ENCODE measurements at regions of chr11 and their contacts with region 1.

Region 1: DNA sequence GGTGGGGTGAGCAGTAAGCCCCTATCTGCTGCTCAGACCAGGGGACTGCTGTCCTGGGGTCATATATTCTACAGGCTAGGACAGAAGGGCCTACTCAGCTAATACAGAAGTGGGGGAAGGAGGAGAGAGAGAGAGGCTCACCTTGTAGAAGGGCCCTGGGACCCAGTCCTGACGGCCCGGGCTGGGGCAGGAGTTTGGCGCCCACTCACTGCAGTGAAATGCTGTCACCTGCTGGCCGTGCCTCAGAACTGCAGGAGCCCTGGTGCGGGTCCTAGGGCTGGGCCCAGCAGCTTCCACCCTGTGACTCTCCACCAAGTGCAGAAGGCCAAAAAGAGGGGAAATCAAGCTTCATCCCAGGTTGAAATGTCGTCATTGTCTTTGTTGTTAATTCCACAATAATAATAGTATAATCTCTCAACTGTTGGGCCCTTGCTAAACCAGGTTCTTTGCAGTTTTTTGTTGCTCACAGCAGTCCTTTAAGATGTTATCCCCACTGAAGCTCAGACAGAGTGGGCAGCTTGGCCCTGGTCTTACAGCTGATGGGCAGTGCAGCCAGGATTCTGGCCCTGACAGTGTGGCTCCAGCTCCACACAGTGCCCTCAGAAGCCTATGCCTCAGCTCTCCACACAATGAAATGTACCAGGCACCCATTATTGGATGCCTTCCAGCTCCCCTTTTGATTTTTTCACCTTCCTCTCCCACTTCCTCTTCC is 29.6 kb downstream of the TRIM29 start:
- DNase-seq: no peak
- ATAC-seq: peak; percentile 97
- H3K4me3 ChIP-seq: no peak overlapping the region
- H3K27ac ChIP-seq: no peak overlapping the region
- H3K4me1 ChIP-seq: no peaks in the 10 kb centered on the region
- H3K27me3 ChIP-seq: peaks cover 12 to 15% of the 10 kb centered on the region in 2 experiments
- CTCF ChIP-seq: peak; percentile 99 to 100 (median 99); a peak in 5 of 6 replicates
- EP300 ChIP-seq: no peak
- POLR2A ChIP-seq: no peak
- RAD21 ChIP-seq: peak; percentile 94

Region 2: GRCh38 chr11:119481021-119481666 is 627.2 kb before region 1 on chr11:
- CTCF ChIA-PET with region 1: interaction called, 13 read pairs
- POLR2A ChIA-PET with region 1: no interaction called
- RAD21 ChIA-PET with region 1: interaction called, 5 read pairs
- SMC1A ChIA-PET with region 1: interaction called, 5 read pairs
- in situ Hi-C with region 1: no loop called
- intact Hi-C with region 1: loop called (anchors 2 kb)
- DNase-seq: peak; percentile 31
- ATAC-seq: peak; percentile 89
- H3K4me3 ChIP-seq: no peak overlapping the region
- H3K27ac ChIP-seq: no peak overlapping the region
- H3K4me1 ChIP-seq: no peaks in the 10 kb centered on the region
- H3K27me3 ChIP-seq: no peaks in the 10 kb centered on the region; a peak in 1 of 4 replicates
- CTCF ChIP-seq: peak; percentile 91 to 99 (median 97)
- EP300 ChIP-seq: no peak
- POLR2A ChIP-seq: no peak
- RAD21 ChIP-seq: peak; percentile 93

Region 3: GRCh38 chr11:119641983-119642745 is 466.1 kb before region 1 on chr11:
- CTCF ChIA-PET with region 1: interaction called, 21 read pairs
- POLR2A ChIA-PET with region 1: no interaction called
- RAD21 ChIA-PET with region 1: interaction called, 10 read pairs
- SMC1A ChIA-PET with region 1: interaction called, 3 read pairs
- in situ Hi-C with region 1: no loop called
- intact Hi-C with region 1: loop called (anchors 1 kb)
- DNase-seq: no peak
- ATAC-seq: peak; percentile 83
- H3K4me3 ChIP-seq: no peak overlapping the region
- H3K27ac ChIP-seq: no peak overlapping the region
- H3K4me1 ChIP-seq: no peaks in the 10 kb centered on the region
- H3K27me3 ChIP-seq: peaks cover 3% of the 10 kb centered on the region in 2 experiments; a peak in 3 of 4 replicates
- CTCF ChIP-seq: peak; percentile 63 to 75 (median 67)
- EP300 ChIP-seq: no peak
- POLR2A ChIP-seq: no peak
- RAD21 ChIP-seq: peak; percentile 49

Region 4: GRCh38 chr11:119666463-119667131 is 441.7 kb before region 1 on chr11:
- CTCF ChIA-PET with region 1: interaction called, 8 read pairs
- POLR2A ChIA-PET with region 1: no interaction called
- RAD21 ChIA-PET with region 1: interaction called, 5 read pairs
- SMC1A ChIA-PET with region 1: interaction called, 7 read pairs
- in situ Hi-C with region 1: loop called (anchors 5 kb)
- intact Hi-C with region 1: loop called (anchors 1 kb)
- DNase-seq: no peak
- ATAC-seq: peak; percentile 100
- H3K4me3 ChIP-seq: no peak overlapping the region
- H3K27ac ChIP-seq: no peak overlapping the region
- H3K4me1 ChIP-seq: no peaks in the 10 kb centered on the region
- H3K27me3 ChIP-seq: no peaks in the 10 kb centered on the region
- CTCF ChIP-seq: peak; percentile 91 to 98 (median 94); a peak in 5 of 6 replicates
- EP300 ChIP-seq: no peak
- POLR2A ChIP-seq: no peak
- RAD21 ChIP-seq: peak; percentile 95

Region 5: DNA sequence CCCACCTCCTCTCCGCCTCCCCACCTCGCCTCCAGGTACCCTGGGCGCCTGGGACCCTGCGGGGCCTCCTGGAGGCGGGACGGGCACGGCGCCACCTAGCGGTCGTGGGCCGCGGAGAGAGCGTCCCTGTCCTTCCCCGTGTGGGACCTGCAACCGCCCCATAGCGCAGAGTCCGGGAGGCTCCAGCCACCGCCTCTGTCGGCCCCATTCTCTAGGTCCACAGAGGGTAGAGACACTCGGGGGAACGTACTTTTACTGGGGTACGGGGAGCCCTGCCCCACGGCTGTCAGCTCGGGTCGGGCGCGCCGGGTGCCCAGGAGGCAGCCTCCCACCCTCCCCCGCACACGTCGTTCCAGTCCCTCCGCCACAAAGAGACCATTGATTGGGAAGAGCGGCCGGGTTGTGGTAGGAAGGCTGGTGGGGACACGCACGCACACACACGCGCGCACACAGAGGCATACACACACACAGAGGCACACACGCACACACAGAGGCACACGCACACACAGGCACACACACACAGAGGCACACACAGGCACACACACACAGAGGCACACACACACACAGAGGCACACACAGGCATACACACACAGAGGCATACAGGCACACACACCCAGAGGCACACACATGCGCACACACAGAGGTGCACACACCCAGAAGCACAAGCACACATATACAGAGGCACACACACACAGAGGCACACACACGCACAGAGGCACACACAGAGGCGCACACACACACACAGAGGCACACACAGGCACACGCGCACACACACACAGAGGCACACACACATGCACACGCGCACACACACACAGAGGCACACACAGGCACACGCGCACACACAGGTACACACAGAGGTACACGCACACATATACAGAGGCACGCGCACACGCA is 366.7 kb before region 1 on chr11:
- CTCF ChIA-PET with region 1: no interaction called
- POLR2A ChIA-PET with region 1: no interaction called
- RAD21 ChIA-PET with region 1: no interaction called
- SMC1A ChIA-PET with region 1: interaction called, 4 read pairs
- in situ Hi-C with region 1: no loop called
- intact Hi-C with region 1: loop called (anchors 5 kb)
- DNase-seq: no peak
- ATAC-seq: peak; percentile 98
- H3K4me3 ChIP-seq: no peak overlapping the region
- H3K27ac ChIP-seq: no peak overlapping the region
- H3K4me1 ChIP-seq: no peaks in the 10 kb centered on the region
- H3K27me3 ChIP-seq: peaks cover 0 to 3% of the 10 kb centered on the region in 2 experiments; a peak in 3 of 4 replicates
- CTCF ChIP-seq: peak; percentile 71 to 87 (median 81)
- EP300 ChIP-seq: no peak
- POLR2A ChIP-seq: no peak
- RAD21 ChIP-seq: peak; percentile 39; the same call in 1 of the 2 replicates

Region 6: GRCh38 chr11:119999220-119999619 is 109.1 kb before region 1 on chr11:
- CTCF ChIA-PET with region 1: interaction called, 14 read pairs
- POLR2A ChIA-PET with region 1: no interaction called
- RAD21 ChIA-PET with region 1: interaction called, 9 read pairs
- SMC1A ChIA-PET with region 1: interaction called, 8 read pairs
- in situ Hi-C with region 1: no loop called
- intact Hi-C with region 1: no loop called
- DNase-seq: no peak
- ATAC-seq: no peak
- H3K4me3 ChIP-seq: no peak overlapping the region
- H3K27ac ChIP-seq: no peak overlapping the region
- H3K4me1 ChIP-seq: no peaks in the 10 kb centered on the region
- H3K27me3 ChIP-seq: no peaks in the 10 kb centered on the region; a peak in 2 of 4 replicates
- CTCF ChIP-seq: peak; percentile 13 to 25 (median 22); a peak in 2 of 6 replicates
- EP300 ChIP-seq: no peak
- POLR2A ChIP-seq: no peak
- RAD21 ChIP-seq: peak; percentile 30; the same call in 1 of the 2 replicates

Region 7: GRCh38 chr11:120013325-120014270 is 94.7 kb before region 1 on chr11:
- CTCF ChIA-PET with region 1: interaction called, 6 read pairs
- POLR2A ChIA-PET with region 1: no interaction called
- RAD21 ChIA-PET with region 1: interaction called, 9 read pairs
- SMC1A ChIA-PET with region 1: interaction called, 6 read pairs
- in situ Hi-C with region 1: no loop called
- intact Hi-C with region 1: loop called (anchors 2 kb)
- DNase-seq: no peak
- ATAC-seq: peak; percentile 93
- H3K4me3 ChIP-seq: no peak overlapping the region
- H3K27ac ChIP-seq: no peak overlapping the region
- H3K4me1 ChIP-seq: no peaks in the 10 kb centered on the region
- H3K27me3 ChIP-seq: peaks cover 4 to 6% of the 10 kb centered on the region in 2 experiments
- CTCF ChIP-seq: peak; percentile 57 to 79 (median 69)
- EP300 ChIP-seq: no peak
- POLR2A ChIP-seq: no peak
- RAD21 ChIP-seq: peak; percentile 48

Region 8: DNA sequence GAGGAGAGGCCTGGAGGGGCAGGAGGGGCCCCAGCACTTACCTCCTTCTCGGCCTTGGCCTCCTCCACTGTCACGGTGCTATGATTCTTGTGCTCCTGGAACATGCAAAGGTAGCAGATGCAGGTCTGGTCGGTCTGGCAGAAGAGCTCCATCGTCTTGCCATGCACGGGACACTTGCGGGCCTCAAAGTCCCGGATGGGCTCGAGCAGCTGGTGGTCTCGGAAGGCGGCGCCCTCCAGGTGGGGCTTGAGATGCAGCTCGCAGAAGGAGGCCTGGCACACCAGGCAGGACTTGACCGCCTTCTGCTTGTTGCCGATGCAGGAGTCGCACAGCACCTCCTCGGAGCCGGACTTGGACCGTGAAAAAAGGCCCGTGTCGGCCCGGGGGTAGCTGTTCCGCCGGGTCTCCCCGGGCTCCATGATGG is 28.9 kb after region 1 on chr11:
- CTCF ChIA-PET with region 1: no interaction called
- POLR2A ChIA-PET with region 1: no interaction called
- RAD21 ChIA-PET with region 1: no interaction called
- SMC1A ChIA-PET with region 1: no interaction called
- in situ Hi-C with region 1: no loop called
- intact Hi-C with region 1: no loop called
- DNase-seq: no peak
- ATAC-seq: no peak
- H3K4me3 ChIP-seq: no peak overlapping the region
- H3K27ac ChIP-seq: no peak overlapping the region
- H3K4me1 ChIP-seq: no peaks in the 10 kb centered on the region
- H3K27me3 ChIP-seq: peaks cover 6 to 13% of the 10 kb centered on the region in 2 experiments; a peak in 3 of 4 replicates
- CTCF ChIP-seq: no peak
- EP300 ChIP-seq: no peak
- POLR2A ChIP-seq: no peak
- RAD21 ChIP-seq: no peak